ENCODE measurements at regions of chr12 and their contacts with region 1.

Region 1: GRCh38 chr12:118206107-118206412 is 70.1 kb downstream of the PEBP1 start:
- DNase-seq: no peak
- ATAC-seq: peak; percentile 14
- H3K4me3 ChIP-seq: no peak overlapping the region
- H3K27ac ChIP-seq: peak overlapping the region; percentile 51
- H3K4me1 ChIP-seq: peaks cover 8% of the 10 kb centered on the region
- H3K27me3 ChIP-seq: no peaks in the 10 kb centered on the region
- CTCF ChIP-seq: no peak
- EP300 ChIP-seq: no peak
- POLR2A ChIP-seq: no peak
- RAD21 ChIP-seq: no peak

Region 2: GRCh38 chr12:117526757-117527478 is 679.1 kb before region 1 on chr12:
- CTCF ChIA-PET with region 1: no interaction called
- POLR2A ChIA-PET with region 1: no interaction called
- RAD21 ChIA-PET with region 1: no interaction called
- SMC1A ChIA-PET with region 1: no interaction called
- in situ Hi-C with region 1: no loop called
- intact Hi-C with region 1: no loop called
- DNase-seq: no peak
- ATAC-seq: no peak
- H3K4me3 ChIP-seq: no peak overlapping the region
- H3K27ac ChIP-seq: no peak overlapping the region
- H3K4me1 ChIP-seq: no peaks in the 10 kb centered on the region
- H3K27me3 ChIP-seq: no peaks in the 10 kb centered on the region; a peak in 1 of 4 replicates
- CTCF ChIP-seq: no peak
- EP300 ChIP-seq: no peak
- POLR2A ChIP-seq: no peak
- RAD21 ChIP-seq: no peak

Region 3: GRCh38 chr12:117994551-117995438 is 211.3 kb before region 1 on chr12:
- CTCF ChIA-PET with region 1: no interaction called
- POLR2A ChIA-PET with region 1: no interaction called
- RAD21 ChIA-PET with region 1: no interaction called
- SMC1A ChIA-PET with region 1: no interaction called
- in situ Hi-C with region 1: no loop called
- intact Hi-C with region 1: no loop called
- DNase-seq: no peak
- ATAC-seq: no peak
- H3K4me3 ChIP-seq: no peak overlapping the region
- H3K27ac ChIP-seq: no peak overlapping the region
- H3K4me1 ChIP-seq: no peaks in the 10 kb centered on the region
- H3K27me3 ChIP-seq: no peaks in the 10 kb centered on the region
- CTCF ChIP-seq: no peak
- EP300 ChIP-seq: no peak
- POLR2A ChIP-seq: no peak
- RAD21 ChIP-seq: no peak

Region 4: GRCh38 chr12:118175823-118176447 is 30.1 kb before region 1 on chr12:
- CTCF ChIA-PET with region 1: no interaction called
- POLR2A ChIA-PET with region 1: interaction called, 3 read pairs
- RAD21 ChIA-PET with region 1: interaction called, 64 read pairs
- SMC1A ChIA-PET with region 1: interaction called, 13 read pairs
- in situ Hi-C with region 1: no loop called
- intact Hi-C with region 1: no loop called
- DNase-seq: peak; percentile 45
- ATAC-seq: peak; percentile 99
- H3K4me3 ChIP-seq: no peak overlapping the region
- H3K27ac ChIP-seq: peak overlapping the region; percentile 22; the same call in 1 of the 2 replicates
- H3K4me1 ChIP-seq: peaks cover 8% of the 10 kb centered on the region
- H3K27me3 ChIP-seq: no peaks in the 10 kb centered on the region
- CTCF ChIP-seq: no peak
- EP300 ChIP-seq: no peak
- POLR2A ChIP-seq: no peak
- RAD21 ChIP-seq: no peak

Region 5: GRCh38 chr12:118237052-118237665 is 31.1 kb after region 1 on chr12:
- CTCF ChIA-PET with region 1: interaction called, 6 read pairs
- POLR2A ChIA-PET with region 1: interaction called, 4 read pairs
- RAD21 ChIA-PET with region 1: interaction called, 24 read pairs
- SMC1A ChIA-PET with region 1: interaction called, 15 read pairs
- in situ Hi-C with region 1: no loop called
- intact Hi-C with region 1: no loop called
- DNase-seq: peak; percentile 65
- ATAC-seq: peak; percentile 93
- H3K4me3 ChIP-seq: no peak overlapping the region
- H3K27ac ChIP-seq: peak overlapping the region; percentile 75
- H3K4me1 ChIP-seq: peaks cover 26% of the 10 kb centered on the region
- H3K27me3 ChIP-seq: no peaks in the 10 kb centered on the region
- CTCF ChIP-seq: no peak
- EP300 ChIP-seq: peak; percentile 27 to 76; a peak in 1 of 4 replicates
- POLR2A ChIP-seq: no peak
- RAD21 ChIP-seq: no peak

Region 6: GRCh38 chr12:118307069-118307954 is 101.3 kb after region 1 on chr12:
- CTCF ChIA-PET with region 1: interaction called, 4 read pairs
- POLR2A ChIA-PET with region 1: interaction called, 3 read pairs
- RAD21 ChIA-PET with region 1: interaction called, 14 read pairs
- SMC1A ChIA-PET with region 1: interaction called, 5 read pairs
- in situ Hi-C with region 1: no loop called
- intact Hi-C with region 1: no loop called
- DNase-seq: peak; percentile 69
- ATAC-seq: peak; percentile 78
- H3K4me3 ChIP-seq: peak overlapping the region; percentile 64
- H3K27ac ChIP-seq: peak overlapping the region; percentile 98
- H3K4me1 ChIP-seq: peaks cover 38% of the 10 kb centered on the region
- H3K27me3 ChIP-seq: no peaks in the 10 kb centered on the region
- CTCF ChIP-seq: no peak
- EP300 ChIP-seq: no peak; a peak in 1 of 4 replicates
- POLR2A ChIP-seq: no peak
- RAD21 ChIP-seq: no peak

Region 7: GRCh38 chr12:118312578-118312977 is 106.5 kb after region 1 on chr12:
- CTCF ChIA-PET with region 1: interaction called, 4 read pairs
- POLR2A ChIA-PET with region 1: interaction called, 3 read pairs
- RAD21 ChIA-PET with region 1: interaction called, 14 read pairs
- SMC1A ChIA-PET with region 1: interaction called, 5 read pairs
- in situ Hi-C with region 1: no loop called
- intact Hi-C with region 1: no loop called
- DNase-seq: peak; percentile 73
- ATAC-seq: peak; percentile 87
- H3K4me3 ChIP-seq: peak overlapping the region; percentile 47; the same call in 1 of the 2 replicates
- H3K27ac ChIP-seq: peak overlapping the region; percentile 82
- H3K4me1 ChIP-seq: peaks cover 40% of the 10 kb centered on the region
- H3K27me3 ChIP-seq: no peaks in the 10 kb centered on the region
- CTCF ChIP-seq: no peak
- EP300 ChIP-seq: peak in 1 of 2 experiments; percentile 38; a peak in 2 of 4 replicates
- POLR2A ChIP-seq: no peak
- RAD21 ChIP-seq: no peak

Region 8: DNA sequence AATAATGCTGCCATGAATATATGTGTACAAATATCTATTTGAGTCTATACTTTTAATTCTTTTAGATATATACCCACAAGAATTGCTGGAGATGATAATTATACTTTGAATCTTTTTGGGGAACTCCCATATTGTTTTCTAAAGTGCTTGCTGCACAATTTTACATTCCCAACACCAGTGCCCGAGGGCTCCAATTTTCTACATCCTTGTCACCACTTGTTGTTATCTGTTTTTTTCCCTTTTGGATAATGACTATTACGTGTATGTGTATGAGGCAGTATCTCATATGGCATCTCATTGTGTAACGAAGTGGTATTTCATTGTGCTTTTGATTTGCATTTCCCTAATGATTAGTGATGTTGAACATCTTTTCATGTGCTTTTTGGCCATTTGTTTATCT is 297.4 kb after region 1 on chr12:
- CTCF ChIA-PET with region 1: no interaction called
- POLR2A ChIA-PET with region 1: no interaction called
- RAD21 ChIA-PET with region 1: no interaction called
- SMC1A ChIA-PET with region 1: no interaction called
- in situ Hi-C with region 1: no loop called
- intact Hi-C with region 1: no loop called
- DNase-seq: no peak
- ATAC-seq: no peak
- H3K4me3 ChIP-seq: no peak overlapping the region
- H3K27ac ChIP-seq: no peak overlapping the region
- H3K4me1 ChIP-seq: no peaks in the 10 kb centered on the region
- H3K27me3 ChIP-seq: no peaks in the 10 kb centered on the region
- CTCF ChIP-seq: no peak
- EP300 ChIP-seq: no peak
- POLR2A ChIP-seq: no peak
- RAD21 ChIP-seq: no peak

Measured in GM12878 (cell line).